BJ (cell line): ENCODE measurements at regions of chr11 and their contacts with region 1.

Region 1: DNA sequence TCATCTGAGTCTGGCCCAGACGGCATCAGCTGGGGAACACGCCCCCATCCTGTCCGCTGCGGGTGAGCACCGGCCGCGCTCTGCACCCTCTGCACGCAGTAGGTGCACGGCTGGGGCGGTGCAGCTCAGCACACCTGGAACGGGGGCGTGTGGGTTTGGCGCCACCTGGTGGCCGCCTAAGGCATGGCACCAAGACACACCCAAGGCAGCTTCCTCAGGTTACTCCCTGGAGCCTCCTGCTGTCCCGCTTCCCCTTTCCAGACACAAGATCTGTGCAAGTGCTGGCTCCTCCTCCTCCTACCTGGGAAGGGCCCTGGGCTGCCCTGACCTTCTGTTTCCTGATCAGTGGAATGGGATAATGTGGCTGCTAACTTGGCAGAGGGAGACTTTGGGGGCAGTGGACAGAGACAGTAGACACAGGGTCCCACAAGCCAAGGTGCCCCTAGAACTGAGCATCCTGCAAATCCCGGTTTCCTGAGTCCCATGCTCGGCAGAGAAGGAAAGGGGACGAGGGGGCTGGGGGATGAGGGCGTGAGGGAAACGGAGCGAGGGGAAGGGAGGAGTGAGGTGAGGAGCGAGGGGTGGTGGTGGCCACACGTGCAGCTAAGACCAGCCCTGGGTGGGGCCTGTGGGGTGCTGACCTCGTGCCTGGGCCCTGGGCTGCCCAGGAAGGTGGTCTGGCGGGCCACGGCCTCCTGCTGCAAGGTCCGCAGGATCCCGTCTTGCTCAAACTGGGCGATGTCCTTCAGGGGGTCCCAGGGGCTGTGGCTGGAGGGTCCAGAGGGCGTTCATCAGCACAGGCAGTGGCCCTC is 34.8 kb upstream of the CARS1 start:
- DNase-seq: no peak
- H3K4me3 ChIP-seq: no peak overlapping the region
- H3K27me3 ChIP-seq: no peaks in the 10 kb centered on the region
- CTCF ChIP-seq: peak; percentile 97

Region 2: DNA sequence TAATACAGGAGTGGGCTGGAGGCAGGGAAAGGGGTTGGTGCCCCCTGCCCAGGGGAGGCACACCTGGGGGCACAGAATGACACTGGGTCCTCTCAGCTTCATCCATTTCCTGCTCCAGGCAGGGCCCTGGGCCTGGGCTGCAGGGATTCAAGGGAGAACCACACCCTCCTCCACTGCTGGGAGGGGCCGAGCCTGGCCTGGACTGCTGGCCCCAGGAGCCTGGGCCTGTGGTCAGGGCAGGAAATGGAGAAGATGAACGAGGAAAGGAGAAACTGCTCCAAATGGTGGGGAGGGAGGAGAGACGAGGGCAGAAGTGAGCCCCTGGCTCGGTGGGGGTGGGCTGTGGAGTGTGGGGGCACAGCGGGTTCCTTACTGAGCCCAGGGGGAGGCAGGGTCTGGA is 354.1 kb before region 1 on chr11:
- CTCF ChIA-PET with region 1: no interaction called
- POLR2A ChIA-PET with region 1: no interaction called
- DNase-seq: no peak
- H3K4me3 ChIP-seq: no peak overlapping the region
- H3K27me3 ChIP-seq: no peaks in the 10 kb centered on the region; the same call in 1 of the 2 replicates
- CTCF ChIP-seq: no peak

Region 3: GRCh38 chr11:3015796-3016195 is 76.2 kb before region 1 on chr11:
- CTCF ChIA-PET with region 1: interaction called, 5 read pairs
- POLR2A ChIA-PET with region 1: interaction called, 12 read pairs
- DNase-seq: no peak
- H3K4me3 ChIP-seq: no peak overlapping the region
- H3K27me3 ChIP-seq: no peaks in the 10 kb centered on the region
- CTCF ChIP-seq: no peak

Region 4: GRCh38 chr11:3049430-3050243 is 42.4 kb before region 1 on chr11:
- CTCF ChIA-PET with region 1: interaction called, 54 read pairs
- POLR2A ChIA-PET with region 1: no interaction called
- DNase-seq: peak; percentile 78
- H3K4me3 ChIP-seq: no peak overlapping the region
- H3K27me3 ChIP-seq: no peaks in the 10 kb centered on the region
- CTCF ChIP-seq: peak; percentile 45; the same call in 1 of the 2 replicates

Region 5: GRCh38 chr11:3074912-3075589 is 16.9 kb before region 1 on chr11:
- CTCF ChIA-PET with region 1: interaction called, 22 read pairs
- POLR2A ChIA-PET with region 1: no interaction called
- DNase-seq: no peak
- H3K4me3 ChIP-seq: no peak overlapping the region
- H3K27me3 ChIP-seq: no peaks in the 10 kb centered on the region
- CTCF ChIP-seq: no peak

Region 6: DNA sequence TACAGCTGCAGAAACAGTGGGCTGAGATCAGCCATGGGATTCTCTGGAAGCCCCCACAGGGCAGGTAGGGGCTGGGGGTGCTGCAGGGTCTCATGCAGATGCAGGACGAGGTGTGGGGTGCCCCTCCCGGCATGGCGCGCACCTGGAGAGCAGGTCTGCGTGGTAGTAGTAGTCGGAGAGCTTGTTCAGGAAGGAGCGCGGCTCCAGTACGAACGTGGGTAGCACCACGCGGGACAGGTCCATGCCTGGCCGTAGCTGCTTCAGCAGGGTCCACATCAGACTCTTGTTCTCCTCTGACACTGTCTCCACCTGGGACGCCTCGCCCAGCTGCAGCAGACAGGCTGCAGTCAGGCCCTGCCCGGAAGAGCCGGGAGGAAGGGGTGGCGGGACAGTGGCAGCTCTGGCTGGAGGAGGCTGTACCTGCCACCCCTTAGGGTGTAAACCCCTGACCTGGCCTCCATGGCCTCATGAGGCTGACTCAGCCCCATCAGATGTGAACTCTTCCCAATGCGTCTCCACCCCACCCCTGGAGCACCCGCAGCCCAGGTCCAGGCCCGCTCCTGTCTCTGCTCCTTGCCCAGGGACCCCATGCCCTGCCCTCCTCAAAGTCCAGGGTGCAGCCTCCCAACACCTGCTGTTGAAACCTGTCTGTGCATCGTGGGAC is 12.2 kb after region 1 on chr11:
- CTCF ChIA-PET with region 1: interaction called, 21 read pairs
- POLR2A ChIA-PET with region 1: no interaction called
- DNase-seq: no peak
- H3K4me3 ChIP-seq: no peak overlapping the region
- H3K27me3 ChIP-seq: no peaks in the 10 kb centered on the region
- CTCF ChIP-seq: no peak